Activated naive CD4-positive, alpha-beta T cell treated with anti-CD3 and anti-CD28 coated beads for 36 hours (primary cell): ENCODE measurements at regions of chr18 and their contacts with region 1.

Region 1: GRCh38 chr18:74331404-74331803 is 15.8 kb downstream of the C18orf63 start:
- DNase-seq: no peak
- H3K4me3 Mint-ChIP-seq: no peak overlapping the region
- H3K27ac Mint-ChIP-seq: no peak overlapping the region
- H3K4me1 Mint-ChIP-seq: no peaks in the 10 kb centered on the region
- H3K27me3 Mint-ChIP-seq: peaks cover 6% of the 10 kb centered on the region

Region 2: GRCh38 chr18:73992242-73993022 is 339.0 kb before region 1 on chr18:
- CTCF ChIA-PET with region 1: no interaction called
- intact Hi-C with region 1: no loop called
- DNase-seq: no peak
- H3K4me3 Mint-ChIP-seq: no peak overlapping the region
- H3K27ac Mint-ChIP-seq: no peak overlapping the region
- H3K4me1 Mint-ChIP-seq: no peaks in the 10 kb centered on the region
- H3K27me3 Mint-ChIP-seq: peaks cover 8% of the 10 kb centered on the region

Region 3: GRCh38 chr18:74163019-74163660 is 168.3 kb before region 1 on chr18:
- CTCF ChIA-PET with region 1: no interaction called
- intact Hi-C with region 1: no loop called
- DNase-seq: no peak
- H3K4me3 Mint-ChIP-seq: no peak overlapping the region
- H3K27ac Mint-ChIP-seq: no peak overlapping the region
- H3K4me1 Mint-ChIP-seq: no peaks in the 10 kb centered on the region
- H3K27me3 Mint-ChIP-seq: no peaks in the 10 kb centered on the region

Region 4: GRCh38 chr18:74196220-74197119 is 134.9 kb before region 1 on chr18:
- CTCF ChIA-PET with region 1: interaction called, 3 read pairs
- intact Hi-C with region 1: loop called (anchors 1 kb)
- DNase-seq: peak; percentile 64
- H3K4me3 Mint-ChIP-seq: peak overlapping the region; percentile 63
- H3K27ac Mint-ChIP-seq: peak overlapping the region; percentile 28
- H3K4me1 Mint-ChIP-seq: peaks cover 3% of the 10 kb centered on the region
- H3K27me3 Mint-ChIP-seq: peaks cover under 1% of the 10 kb centered on the region